ENCODE measurements at regions of chr6 and their contacts with region 1.

Region 1: DNA sequence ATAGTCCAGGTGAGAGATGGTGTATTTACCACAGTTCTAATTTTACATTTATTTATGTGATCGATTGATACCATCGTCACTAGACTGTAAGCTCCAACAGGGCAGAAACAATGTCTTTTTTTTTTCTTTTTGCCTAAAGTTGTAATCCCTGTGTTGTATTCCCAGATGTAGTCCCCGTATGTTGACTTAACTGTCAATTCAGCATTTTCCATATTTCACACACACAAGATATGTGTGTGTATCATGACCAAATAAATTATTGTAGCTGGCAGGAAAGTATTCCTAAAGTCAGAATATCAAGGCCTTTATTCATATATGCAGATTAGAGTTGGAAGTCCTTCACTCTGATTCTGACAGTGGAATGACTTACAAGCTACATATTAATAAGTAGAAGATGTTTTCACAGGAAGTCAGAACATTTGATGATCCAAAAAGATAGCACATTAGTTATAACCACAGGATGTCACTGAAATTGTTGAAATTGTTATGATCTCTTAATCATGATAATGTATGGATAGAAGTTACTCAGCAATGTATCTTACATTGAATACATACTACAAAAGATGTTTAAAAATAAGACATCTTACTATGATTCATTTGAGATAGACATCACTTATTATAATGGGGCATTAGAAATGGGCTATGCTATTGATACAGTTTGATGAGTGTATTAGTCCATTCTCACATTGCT is 10.6 kb downstream of the RNF182 start:
- DNase-seq: no peak
- ATAC-seq: no peak
- H3K4me3 ChIP-seq: no peak overlapping the region
- H3K27ac ChIP-seq: no peak overlapping the region
- H3K4me1 ChIP-seq: no peaks in the 10 kb centered on the region
- H3K27me3 ChIP-seq: no peaks in the 10 kb centered on the region
- CTCF ChIP-seq: no peak
- POLR2A ChIP-seq: no peak
- RAD21 ChIP-seq: no peak

Region 2: DNA sequence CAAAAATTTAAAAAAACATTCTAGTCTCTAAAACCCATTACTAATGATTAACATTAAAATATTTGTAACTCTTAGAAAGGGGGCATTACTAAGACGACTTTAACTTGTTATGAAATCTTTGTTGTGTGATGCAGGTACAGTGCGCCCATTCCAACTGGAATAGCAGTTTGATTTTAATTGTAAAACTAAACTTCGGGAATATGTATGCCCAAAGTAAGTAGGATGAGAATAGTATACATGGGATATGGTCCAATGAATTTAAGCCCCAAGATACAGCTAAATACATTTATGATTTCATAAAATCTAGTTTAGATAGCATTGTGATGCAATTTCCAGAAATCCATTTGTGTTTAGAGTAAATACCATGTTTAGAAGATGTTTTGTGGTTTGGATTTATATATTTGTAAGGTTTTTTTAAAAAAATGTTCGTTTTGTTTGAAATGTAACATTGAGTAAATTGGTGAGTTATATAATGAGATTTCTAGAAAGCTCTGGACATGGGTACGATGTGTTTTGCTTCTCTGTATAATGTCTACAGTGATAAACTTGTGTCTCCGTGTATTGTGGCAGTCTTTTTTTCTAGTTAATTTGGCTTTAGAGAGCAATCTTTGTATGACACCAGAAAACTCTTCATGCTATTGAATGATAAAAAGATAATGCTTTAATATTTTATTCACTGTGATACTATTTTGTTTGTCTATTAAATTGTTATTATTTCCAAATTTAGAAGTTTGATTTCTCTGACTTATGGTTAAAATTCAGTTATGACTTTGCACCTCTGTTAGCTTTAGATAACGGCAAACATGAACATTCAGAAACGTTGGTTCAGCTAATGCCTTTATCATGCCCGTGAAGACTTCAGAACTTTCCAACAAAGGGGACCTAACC is 44.2 kb after region 1 on chr6:
- CTCF ChIA-PET with region 1: no interaction called
- POLR2A ChIA-PET with region 1: no interaction called
- RAD21 ChIA-PET with region 1: no interaction called
- intact Hi-C with region 1: loop called (anchors 5 kb)
- DNase-seq: no peak
- ATAC-seq: no peak
- H3K4me3 ChIP-seq: no peak overlapping the region
- H3K27ac ChIP-seq: no peak overlapping the region
- H3K4me1 ChIP-seq: no peaks in the 10 kb centered on the region
- H3K27me3 ChIP-seq: no peaks in the 10 kb centered on the region
- CTCF ChIP-seq: no peak
- POLR2A ChIP-seq: no peak
- RAD21 ChIP-seq: no peak

Measured in HCT116 (cell line).